ENCODE measurements at regions of chr7 and their contacts with region 1.

Region 1: DNA sequence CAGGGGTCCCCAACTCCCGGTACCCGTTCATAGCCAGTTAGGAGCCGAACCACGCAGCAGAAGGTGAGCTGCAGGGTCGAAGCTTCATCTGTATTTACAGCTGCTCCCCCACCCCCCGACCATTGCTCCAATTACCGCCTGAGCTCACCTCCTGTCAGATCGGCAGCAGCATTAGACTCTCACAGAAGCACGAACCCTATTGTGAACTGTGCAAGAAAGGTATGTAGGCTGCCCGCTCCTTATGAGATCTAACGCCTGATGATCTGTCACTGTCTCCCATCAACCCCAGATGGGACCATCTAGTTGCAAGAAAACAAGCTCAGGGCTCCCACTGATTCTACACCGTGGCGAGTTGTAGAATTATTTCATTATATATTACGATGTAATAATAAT is 14.6 kb upstream of the AZGP1 start:
- DNase-seq: peak in 1 of 2 donors; percentile 67
- ATAC-seq: no peak
- H3K4me3 ChIP-seq: peak overlapping the region in 1 of 2 donors; percentile 27
- H3K27ac ChIP-seq: no peak overlapping the region
- H3K4me1 ChIP-seq: no peaks in the 10 kb centered on the region
- H3K27me3 ChIP-seq: no peaks in the 10 kb centered on the region

Region 2: GRCh38 chr7:99910976-99911375 is 79.5 kb before region 1 on chr7:
- intact Hi-C with region 1: loop called (anchors 5 to 10 kb)
- DNase-seq: no peak
- ATAC-seq: no peak
- H3K4me3 ChIP-seq: no peak overlapping the region
- H3K27ac ChIP-seq: no peak overlapping the region
- H3K4me1 ChIP-seq: no peaks in the 10 kb centered on the region
- H3K27me3 ChIP-seq: no peaks in the 10 kb centered on the region

Region 3: GRCh38 chr7:100081535-100082102 is 91.2 kb after region 1 on chr7 and contains the start of gene ZNF3:
- intact Hi-C with region 1: loop called in 1 of 2 experiments (anchors 5 kb)
- DNase-seq: peak; percentile 99
- ATAC-seq: peak; percentile 98
- H3K4me3 ChIP-seq: peak within 1 kb of the TSS; percentile 61 to 83
- H3K27ac ChIP-seq: peak within 1 kb of the TSS in 1 of 2 donors; percentile 26
- H3K4me1 ChIP-seq: no peaks in the 10 kb centered on the region
- H3K27me3 ChIP-seq: no peaks in the 10 kb centered on the region
- total RNA-seq, gene ZNF3: 22.0 to 26.7 TPM

Region 4: DNA sequence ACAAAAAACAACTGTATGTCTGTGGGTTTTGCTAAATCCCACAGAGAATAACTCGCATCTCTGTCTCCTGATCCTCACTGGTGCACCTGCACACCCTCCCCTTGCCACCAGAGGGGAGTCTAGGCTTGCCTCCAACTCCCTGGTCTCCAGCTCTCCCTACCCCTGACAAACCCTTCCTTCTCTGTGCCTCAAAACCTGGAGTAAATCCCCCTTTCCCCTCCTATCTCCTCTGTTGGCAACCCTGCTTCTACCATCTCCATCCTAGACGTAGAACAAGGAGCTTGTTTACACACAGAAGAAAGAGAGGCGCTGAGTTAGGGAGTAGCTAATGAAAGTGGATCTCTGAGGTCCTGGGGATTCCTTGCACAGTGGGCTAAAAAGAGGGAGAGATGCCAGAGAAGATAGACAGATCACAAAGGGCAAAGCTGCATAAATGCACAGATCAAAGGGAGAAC is 142.3 kb after region 1 on chr7:
- intact Hi-C with region 1: loop called in 1 of 2 experiments (anchors 2 kb)
- DNase-seq: no peak
- ATAC-seq: no peak
- H3K4me3 ChIP-seq: no peak overlapping the region
- H3K27ac ChIP-seq: no peak overlapping the region
- H3K4me1 ChIP-seq: no peaks in the 10 kb centered on the region
- H3K27me3 ChIP-seq: no peaks in the 10 kb centered on the region